ENCODE measurements at regions of chr1 and their contacts with region 1.

Region 1: GRCh38 chr1:186605762-186606350 is 74.4 kb downstream of the PTGS2 start:
- DNase-seq: peak; percentile 36
- H3K4me3 Mint-ChIP-seq: no peak overlapping the region
- H3K27ac Mint-ChIP-seq: no peak overlapping the region
- H3K4me1 Mint-ChIP-seq: no peaks in the 10 kb centered on the region
- H3K27me3 Mint-ChIP-seq: peaks cover 14% of the 10 kb centered on the region

Region 2: GRCh38 chr1:186633116-186633515 is 27.3 kb after region 1 on chr1:
- CTCF ChIA-PET with region 1: no interaction called
- POLR2A ChIA-PET with region 1: no interaction called
- DNase-seq: no peak
- H3K4me3 Mint-ChIP-seq: no peak overlapping the region
- H3K27ac Mint-ChIP-seq: no peak overlapping the region
- H3K4me1 Mint-ChIP-seq: no peaks in the 10 kb centered on the region
- H3K27me3 Mint-ChIP-seq: peaks cover 11% of the 10 kb centered on the region

Region 3: DNA sequence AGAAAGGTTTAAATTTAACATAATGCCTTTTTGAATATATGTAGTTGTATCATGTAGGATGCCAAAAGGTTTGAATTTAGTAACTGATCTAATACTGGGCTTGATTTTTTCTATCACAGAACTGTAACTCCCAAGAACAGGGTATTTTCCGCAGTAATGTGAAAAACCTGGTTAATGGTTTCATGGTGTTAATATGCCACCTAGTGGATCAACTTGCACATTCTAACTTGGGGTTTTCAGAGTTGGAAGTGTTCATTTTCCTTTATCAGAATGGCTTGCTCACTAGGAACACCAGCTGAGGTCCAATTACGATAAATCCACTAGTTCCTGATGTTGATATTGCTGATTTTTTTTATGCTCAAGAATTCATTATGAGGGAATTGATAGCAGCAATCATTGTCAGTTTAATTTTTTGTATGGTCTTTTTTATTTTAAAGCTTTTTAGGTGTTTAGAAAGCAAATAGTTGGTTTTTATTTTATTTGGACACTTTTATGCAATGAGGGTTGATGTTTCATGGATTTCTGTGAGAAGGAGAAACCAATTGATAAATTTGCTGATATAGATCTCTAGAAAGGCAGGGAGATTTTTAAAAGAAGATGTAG is 380.1 kb after region 1 on chr1:
- CTCF ChIA-PET with region 1: interaction called, 10 read pairs
- POLR2A ChIA-PET with region 1: no interaction called
- DNase-seq: no peak
- H3K4me3 Mint-ChIP-seq: no peak overlapping the region
- H3K27ac Mint-ChIP-seq: no peak overlapping the region
- H3K4me1 Mint-ChIP-seq: no peaks in the 10 kb centered on the region
- H3K27me3 Mint-ChIP-seq: peaks cover 4% of the 10 kb centered on the region

Measured in activated CD4-positive, alpha-beta memory T cell treated with anti-CD3 and anti-CD28 coated beads, Interleukin-2, amount 10 ng/mL, durations not matched to agents 7 days and 5 days (primary cell).